Heart left ventricle (tissue), 16 donors: ENCODE measurements at regions of chr12 and their contacts with region 1.

Region 1: GRCh38 chr12:30965613-30965985 is 39.1 kb downstream of the TSPAN11 start:
- DNase-seq: peak in 1 of 5 donors; percentile 15
- ATAC-seq: no peak
- H3K4me3 ChIP-seq: no peak overlapping the region
- H3K27ac ChIP-seq: no peak overlapping the region
- H3K4me1 ChIP-seq: peaks cover 0 to 25% (median 6%) of the 10 kb centered on the region in 12 donors
- H3K27me3 ChIP-seq: no peaks in the 10 kb centered on the region
- CTCF ChIP-seq: peak in 5 of 12 donors; percentile 12 to 36 (median 14)
- POLR2A ChIP-seq: no peak

Region 2: GRCh38 chr12:31035967-31036665 is 70.5 kb after region 1 on chr12:
- intact Hi-C with region 1: loop called in 1 of 10 experiments (anchors 5 kb)
- DNase-seq: no peak
- ATAC-seq: no peak
- H3K4me3 ChIP-seq: no peak overlapping the region
- H3K27ac ChIP-seq: no peak overlapping the region
- H3K4me1 ChIP-seq: peaks cover 0 to 21% (median 0%) of the 10 kb centered on the region in 12 donors
- H3K27me3 ChIP-seq: no peaks in the 10 kb centered on the region
- CTCF ChIP-seq: no peak
- POLR2A ChIP-seq: no peak